ENCODE measurements at regions of chr10 and their contacts with region 1.

Region 1: DNA sequence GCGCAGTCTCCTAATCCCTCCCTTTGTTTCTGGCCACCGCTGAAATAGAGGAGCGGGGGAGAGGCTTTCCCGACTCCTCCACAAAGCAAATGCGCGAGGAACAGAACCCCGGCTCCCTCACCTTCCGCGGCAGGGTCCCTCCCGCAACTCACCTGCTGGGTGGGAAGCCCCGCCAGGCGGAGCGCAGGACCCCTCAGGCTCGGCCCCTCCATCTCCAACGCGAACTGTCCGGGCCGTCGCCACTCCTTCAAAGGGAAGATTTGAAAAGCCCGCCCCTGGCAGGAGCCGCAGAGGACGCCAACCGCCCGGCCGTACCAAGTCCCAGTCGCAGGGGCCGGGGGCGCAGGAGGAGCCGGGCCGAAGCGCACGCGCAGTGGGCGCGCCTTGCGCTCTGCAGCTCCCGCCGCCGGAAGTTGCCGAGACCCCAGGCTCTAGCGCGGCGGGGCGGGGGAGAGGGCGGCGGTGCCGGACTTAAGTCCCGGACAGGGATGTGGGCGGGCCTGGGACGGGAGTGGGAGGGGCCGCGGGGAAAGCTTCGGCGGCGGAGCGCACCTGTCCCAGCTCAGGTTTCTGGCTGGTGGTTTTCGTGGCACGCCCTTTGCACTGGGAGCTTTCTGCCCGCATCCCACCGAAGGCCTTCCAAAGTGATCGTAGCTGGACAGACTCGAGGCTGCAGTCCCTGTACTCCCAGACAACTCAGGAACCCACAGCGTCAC is at the start of gene RTKN2:
- DNase-seq: peak; percentile 69 to 75 (median 74)
- H3K4me3 ChIP-seq: peak within 1 kb of the TSS; percentile 34 to 73
- H3K4me3 Mint-ChIP-seq: peak within 1 kb of the TSS; percentile 83 to 94 (median 88)
- H3K27ac ChIP-seq: no peak within 1 kb of the TSS
- H3K27ac Mint-ChIP-seq: peak within 1 kb of the TSS; percentile 16 to 84 (median 48)
- H3K4me1 ChIP-seq: peaks cover 16% of the 10 kb centered on the region
- H3K4me1 Mint-ChIP-seq: peaks cover 6 to 21% (median 12%) of the 10 kb centered on the region in 4 donors
- H3K27me3 ChIP-seq: peaks cover 10% of the 10 kb centered on the region
- H3K27me3 Mint-ChIP-seq: peaks cover 3 to 4% of the 10 kb centered on the region in 2 donors
- total RNA-seq, gene RTKN2: 11.0 to 12.2 TPM

Region 2: DNA sequence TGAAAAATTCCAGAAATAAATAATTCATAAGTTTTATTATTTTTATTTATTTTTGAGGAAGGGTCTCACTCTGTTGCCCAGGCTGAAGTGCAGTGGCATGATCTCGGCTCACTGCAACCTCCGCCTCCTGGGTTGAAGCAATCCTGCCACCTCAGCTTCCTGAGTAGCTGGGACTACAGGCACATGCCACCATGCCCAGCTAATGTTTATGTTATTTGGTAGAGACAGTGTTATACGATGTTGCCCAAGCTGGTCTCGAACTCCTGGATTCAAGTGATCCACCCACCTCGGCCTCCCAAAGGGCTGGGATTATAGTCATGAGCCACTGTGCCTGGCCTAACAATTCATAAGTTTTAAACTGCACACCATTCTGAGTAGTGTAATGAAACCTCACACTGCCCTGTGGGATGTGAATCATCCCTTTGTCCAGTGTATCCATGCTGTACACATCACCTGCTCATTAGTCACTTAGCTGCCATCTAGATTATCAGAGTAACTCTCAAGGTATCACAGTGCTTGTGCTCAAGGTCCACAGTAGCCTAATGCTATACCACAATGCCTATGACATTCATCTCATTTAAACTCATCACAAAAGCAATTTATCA is 17.9 kb before region 1 on chr10:
- CTCF ChIA-PET with region 1: interaction called, 13 read pairs
- POLR2A ChIA-PET with region 1: no interaction called
- intact Hi-C with region 1: no loop called
- DNase-seq: no peak
- H3K4me3 ChIP-seq: no peak overlapping the region
- H3K4me3 Mint-ChIP-seq: no peak overlapping the region
- H3K27ac ChIP-seq: no peak overlapping the region
- H3K27ac Mint-ChIP-seq: no peak overlapping the region
- H3K4me1 ChIP-seq: no peaks in the 10 kb centered on the region
- H3K4me1 Mint-ChIP-seq: peaks cover 0 to 3% (median 0%) of the 10 kb centered on the region in 4 donors
- H3K27me3 ChIP-seq: no peaks in the 10 kb centered on the region
- H3K27me3 Mint-ChIP-seq: peaks cover 0 to under 1% of the 10 kb centered on the region in 2 donors

Region 3: GRCh38 chr10:62384057-62384446 is 115.5 kb after region 1 on chr10:
- CTCF ChIA-PET with region 1: interaction called, 3 read pairs
- POLR2A ChIA-PET with region 1: no interaction called
- intact Hi-C with region 1: loop called (anchors 5 kb)
- DNase-seq: peak; percentile 70 to 90 (median 72)
- H3K4me3 ChIP-seq: peak overlapping the region in 1 of 2 donors; percentile 20
- H3K4me3 Mint-ChIP-seq: peak overlapping the region; percentile 41 to 69 (median 62)
- H3K27ac ChIP-seq: peak overlapping the region; percentile 52
- H3K27ac Mint-ChIP-seq: peak overlapping the region; percentile 70 to 88 (median 81)
- H3K4me1 ChIP-seq: peaks cover 48% of the 10 kb centered on the region
- H3K4me1 Mint-ChIP-seq: peaks cover 42 to 87% (median 57%) of the 10 kb centered on the region in 4 donors
- H3K27me3 ChIP-seq: no peaks in the 10 kb centered on the region
- H3K27me3 Mint-ChIP-seq: no peaks in the 10 kb centered on the region

Region 4: GRCh38 chr10:62414359-62414758 is 145.8 kb after region 1 on chr10:
- CTCF ChIA-PET with region 1: interaction called, 25 read pairs
- POLR2A ChIA-PET with region 1: no interaction called
- intact Hi-C with region 1: loop called (anchors 1 kb)
- DNase-seq: no peak
- H3K4me3 ChIP-seq: no peak overlapping the region
- H3K4me3 Mint-ChIP-seq: no peak overlapping the region
- H3K27ac ChIP-seq: no peak overlapping the region
- H3K27ac Mint-ChIP-seq: no peak overlapping the region
- H3K4me1 ChIP-seq: no peaks in the 10 kb centered on the region
- H3K4me1 Mint-ChIP-seq: no peaks in the 10 kb centered on the region
- H3K27me3 ChIP-seq: no peaks in the 10 kb centered on the region
- H3K27me3 Mint-ChIP-seq: peaks cover 2 to 12% of the 10 kb centered on the region in 2 donors

Region 5: GRCh38 chr10:62422068-62422590 is 153.6 kb after region 1 on chr10:
- CTCF ChIA-PET with region 1: interaction called, 25 read pairs
- POLR2A ChIA-PET with region 1: no interaction called
- intact Hi-C with region 1: no loop called
- DNase-seq: no peak
- H3K4me3 ChIP-seq: no peak overlapping the region
- H3K4me3 Mint-ChIP-seq: no peak overlapping the region
- H3K27ac ChIP-seq: no peak overlapping the region
- H3K27ac Mint-ChIP-seq: no peak overlapping the region
- H3K4me1 ChIP-seq: no peaks in the 10 kb centered on the region
- H3K4me1 Mint-ChIP-seq: no peaks in the 10 kb centered on the region
- H3K27me3 ChIP-seq: no peaks in the 10 kb centered on the region
- H3K27me3 Mint-ChIP-seq: peaks cover 0 to 3% of the 10 kb centered on the region in 2 donors